PC-9 (cell line): ENCODE measurements at regions of chr2 and their contacts with region 1.

Region 1: DNA sequence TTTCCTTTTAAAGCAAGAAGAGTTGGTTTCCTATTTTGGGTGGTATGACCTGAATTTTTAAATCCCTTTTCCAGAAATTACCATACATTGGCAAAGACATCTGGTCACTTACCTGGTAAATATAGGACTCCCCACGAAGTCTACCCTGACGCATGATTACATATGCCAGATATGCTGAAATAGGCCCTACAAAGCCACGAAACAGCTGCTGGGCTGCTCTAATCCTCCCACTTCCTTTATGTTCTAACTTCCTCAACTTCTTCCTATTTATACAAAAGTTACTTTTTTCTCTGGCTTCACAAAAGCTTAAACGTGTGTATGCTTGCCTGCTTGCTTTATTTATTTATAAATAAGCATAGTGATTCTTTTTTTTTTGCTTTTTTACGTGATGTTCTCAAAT is 186.0 kb upstream of the EPHA4 start:
- DNase-seq: no peak
- H3K4me3 ChIP-seq: no peak overlapping the region
- H3K27ac ChIP-seq: no peak overlapping the region
- H3K4me1 ChIP-seq: no peaks in the 10 kb centered on the region
- H3K27me3 ChIP-seq: no peaks in the 10 kb centered on the region
- CTCF ChIP-seq: no peak

Region 2: GRCh38 chr2:221610675-221611074 is 147.4 kb before region 1 on chr2:
- CTCF ChIA-PET with region 1: interaction called, 16 read pairs
- POLR2A ChIA-PET with region 1: no interaction called
- intact Hi-C with region 1: no loop called
- DNase-seq: no peak
- H3K4me3 ChIP-seq: no peak overlapping the region
- H3K27ac ChIP-seq: no peak overlapping the region
- H3K4me1 ChIP-seq: no peaks in the 10 kb centered on the region
- H3K27me3 ChIP-seq: no peaks in the 10 kb centered on the region
- CTCF ChIP-seq: no peak